IMR-90 (cell line): ENCODE measurements at regions of chr7 and their contacts with region 1.

Region 1: GRCh38 chr7:19107356-19108146 is 9.9 kb downstream of the TWIST1 start:
- DNase-seq: peak; percentile 68
- ATAC-seq: peak; percentile 74
- H3K4me3 ChIP-seq: peak overlapping the region; percentile 45
- H3K27ac ChIP-seq: peak overlapping the region; percentile 52
- H3K4me1 ChIP-seq: peaks cover 6% of the 10 kb centered on the region
- H3K27me3 ChIP-seq: no peaks in the 10 kb centered on the region
- CTCF ChIP-seq: no peak
- POLR2A ChIP-seq: no peak
- RAD21 ChIP-seq: no peak

Region 2: GRCh38 chr7:18096087-18096486 is 1011.5 kb before region 1 on chr7:
- CTCF ChIA-PET with region 1: no interaction called
- POLR2A ChIA-PET with region 1: no interaction called
- dilution Hi-C with region 1: no loop called
- in situ Hi-C with region 1: no loop called
- intact Hi-C with region 1: no loop called
- DNase-seq: no peak
- ATAC-seq: no peak
- H3K4me3 ChIP-seq: no peak overlapping the region
- H3K27ac ChIP-seq: no peak overlapping the region
- H3K4me1 ChIP-seq: no peaks in the 10 kb centered on the region
- H3K27me3 ChIP-seq: peaks cover 5% of the 10 kb centered on the region; the same call in 1 of the 2 replicates
- CTCF ChIP-seq: no peak
- POLR2A ChIP-seq: no peak
- RAD21 ChIP-seq: no peak

Region 3: DNA sequence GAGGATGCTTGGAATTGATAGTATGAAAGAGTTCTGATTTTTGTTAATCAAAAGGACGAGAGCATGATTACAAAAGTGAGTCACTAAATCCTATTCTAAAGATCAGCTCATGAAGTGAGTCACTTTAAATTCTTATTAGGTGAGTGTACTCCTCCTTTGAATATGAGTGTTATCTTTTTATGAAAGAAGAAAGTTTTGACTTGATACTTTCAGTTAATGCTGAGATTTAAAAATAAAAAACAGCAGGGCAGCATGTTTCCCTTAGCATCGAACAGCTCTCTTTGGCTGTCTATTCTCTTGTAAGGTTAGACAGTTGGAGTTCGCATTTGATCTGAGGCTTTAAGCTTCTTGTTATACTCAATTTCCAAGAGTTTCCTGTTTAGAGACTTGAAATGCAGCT is 212.1 kb before region 1 on chr7:
- CTCF ChIA-PET with region 1: no interaction called
- POLR2A ChIA-PET with region 1: no interaction called
- dilution Hi-C with region 1: no loop called
- in situ Hi-C with region 1: no loop called
- intact Hi-C with region 1: loop called (anchors 5 kb)
- DNase-seq: peak; percentile 88
- ATAC-seq: peak; percentile 59
- H3K4me3 ChIP-seq: peak overlapping the region; percentile 27; the same call in 1 of the 2 replicates
- H3K27ac ChIP-seq: no peak overlapping the region; the same call in 1 of the 2 replicates
- H3K4me1 ChIP-seq: peaks cover 7% of the 10 kb centered on the region
- H3K27me3 ChIP-seq: no peaks in the 10 kb centered on the region
- CTCF ChIP-seq: no peak
- POLR2A ChIP-seq: no peak
- RAD21 ChIP-seq: no peak

Region 4: DNA sequence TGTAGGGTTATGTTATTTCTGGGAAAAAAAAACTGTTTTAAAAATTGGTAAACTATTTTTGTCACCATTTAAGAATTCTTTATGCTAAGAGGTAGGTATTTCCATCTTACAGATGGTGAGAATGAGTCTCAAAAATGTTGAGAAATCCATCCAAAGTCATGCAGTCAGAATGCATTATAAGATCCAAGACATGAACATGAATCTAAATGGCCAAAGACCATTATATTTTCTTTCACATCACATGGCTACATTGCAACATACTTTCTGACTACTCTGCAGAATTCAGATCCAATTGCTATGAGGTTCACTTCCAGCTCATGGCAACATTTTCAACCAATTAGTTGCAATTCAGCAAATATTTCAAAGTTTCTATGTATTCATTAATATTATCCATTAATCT is 171.3 kb before region 1 on chr7:
- CTCF ChIA-PET with region 1: no interaction called
- POLR2A ChIA-PET with region 1: no interaction called
- dilution Hi-C with region 1: no loop called
- in situ Hi-C with region 1: no loop called
- intact Hi-C with region 1: no loop called
- DNase-seq: peak; percentile 15
- ATAC-seq: no peak
- H3K4me3 ChIP-seq: no peak overlapping the region
- H3K27ac ChIP-seq: no peak overlapping the region
- H3K4me1 ChIP-seq: no peaks in the 10 kb centered on the region
- H3K27me3 ChIP-seq: no peaks in the 10 kb centered on the region
- CTCF ChIP-seq: no peak
- POLR2A ChIP-seq: no peak
- RAD21 ChIP-seq: no peak